ENCODE measurements at regions of chr11 and their contacts with region 1.

Region 1: DNA sequence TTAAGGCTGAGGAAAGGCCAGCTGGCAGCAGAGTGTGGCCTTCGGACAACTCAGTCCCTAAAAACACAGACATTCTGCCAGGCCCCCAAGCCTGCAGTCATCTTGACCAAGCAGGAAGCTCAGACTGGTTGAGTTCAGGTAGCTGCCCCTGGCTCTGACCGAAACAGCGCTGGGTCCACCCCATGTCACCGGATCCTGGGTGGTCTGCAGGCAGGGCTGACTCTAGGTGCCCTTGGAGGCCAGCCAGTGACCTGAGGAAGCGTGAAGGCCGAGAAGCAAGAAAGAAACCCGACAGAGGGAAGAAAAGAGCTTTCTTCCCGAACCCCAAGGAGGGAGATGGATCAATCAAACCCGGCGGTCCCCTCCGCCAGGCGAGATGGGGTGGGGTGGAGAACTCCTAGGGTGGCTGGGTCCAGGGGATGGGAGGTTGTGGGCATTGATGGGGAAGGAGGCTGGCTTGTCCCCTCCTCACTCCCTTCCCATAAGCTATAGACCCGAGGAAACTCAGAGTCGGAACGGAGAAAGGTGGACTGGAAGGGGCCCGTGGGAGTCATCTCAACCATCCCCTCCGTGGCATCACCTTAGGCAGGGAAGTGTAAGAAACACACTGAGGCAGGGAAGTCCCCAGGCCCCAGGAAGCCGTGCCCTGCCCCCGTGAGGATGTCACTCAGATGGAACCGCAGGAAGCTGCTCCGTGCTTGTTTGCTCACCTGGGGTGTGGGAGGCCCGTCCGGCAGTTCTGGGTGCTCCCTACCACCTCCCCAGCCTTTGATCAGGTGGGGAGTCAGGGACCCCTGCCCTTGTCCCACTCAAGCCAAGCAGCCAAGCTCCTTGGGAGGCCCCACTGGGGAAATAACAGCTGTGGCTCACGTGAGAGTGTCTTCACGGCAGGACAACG is 11.7 kb downstream of the CXCR5 start:
- DNase-seq: peak; percentile 95
- H3K4me3 Mint-ChIP-seq: peak overlapping the region; percentile 72
- H3K27ac Mint-ChIP-seq: peak overlapping the region; percentile 97
- H3K4me1 Mint-ChIP-seq: peaks cover 78% of the 10 kb centered on the region
- H3K27me3 Mint-ChIP-seq: no peaks in the 10 kb centered on the region

Region 2: DNA sequence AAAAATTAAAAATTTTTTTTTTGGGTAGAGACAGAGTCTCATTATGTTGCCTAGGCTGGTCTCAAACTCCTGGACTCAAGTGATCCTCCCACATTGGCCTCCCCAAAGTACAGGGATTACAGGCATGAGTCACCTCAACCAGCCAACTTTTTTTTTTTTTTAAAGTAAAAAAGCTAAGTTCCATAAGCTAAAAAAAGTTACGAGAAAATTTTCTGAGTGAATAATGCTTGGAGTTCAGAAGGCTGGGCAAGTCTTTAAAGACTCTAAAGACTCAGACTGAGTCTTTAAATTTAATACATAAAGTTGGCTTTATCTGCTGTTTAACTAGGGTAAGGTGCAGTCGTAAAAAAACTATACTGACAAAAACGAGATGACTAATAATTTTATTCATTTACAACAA is 110.0 kb before region 1 on chr11:
- CTCF ChIA-PET with region 1: interaction called, 32 read pairs
- intact Hi-C with region 1: no loop called
- DNase-seq: peak; percentile 52
- H3K4me3 Mint-ChIP-seq: peak overlapping the region; percentile 42
- H3K27ac Mint-ChIP-seq: peak overlapping the region; percentile 81
- H3K4me1 Mint-ChIP-seq: peaks cover 54% of the 10 kb centered on the region
- H3K27me3 Mint-ChIP-seq: no peaks in the 10 kb centered on the region

Region 3: DNA sequence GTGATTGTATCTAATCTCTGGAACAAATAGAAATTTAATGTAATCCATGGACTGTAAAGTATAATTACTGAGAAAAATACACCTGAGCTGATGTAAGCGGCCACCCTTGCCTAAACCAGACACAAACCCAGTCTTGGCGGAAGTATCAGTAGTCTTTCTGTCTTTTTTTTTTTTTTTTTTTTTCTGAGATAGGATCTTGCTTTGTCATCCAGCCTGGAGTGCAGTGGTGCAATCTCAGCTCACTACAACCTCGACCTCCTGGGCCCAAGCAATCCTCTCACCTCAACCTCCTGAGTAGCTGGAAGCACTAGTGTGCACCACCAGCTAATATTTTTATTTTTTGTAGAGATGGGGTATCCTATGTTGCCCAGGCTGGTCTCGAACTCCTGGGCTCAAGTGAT is 17.2 kb before region 1 on chr11:
- CTCF ChIA-PET with region 1: interaction called, 32 read pairs
- intact Hi-C with region 1: loop called (anchors 1 kb)
- DNase-seq: peak; percentile 63
- H3K4me3 Mint-ChIP-seq: peak overlapping the region; percentile 31
- H3K27ac Mint-ChIP-seq: peak overlapping the region; percentile 99
- H3K4me1 Mint-ChIP-seq: peaks cover 96% of the 10 kb centered on the region
- H3K27me3 Mint-ChIP-seq: no peaks in the 10 kb centered on the region

Region 4: GRCh38 chr11:118883368-118884071 is 11.9 kb before region 1 on chr11 and contains the start of gene CXCR5:
- CTCF ChIA-PET with region 1: interaction called, 32 read pairs
- intact Hi-C with region 1: loop called (anchors 1 kb)
- DNase-seq: peak; percentile 87
- H3K4me3 Mint-ChIP-seq: peak within 1 kb of the TSS; percentile 83
- H3K27ac Mint-ChIP-seq: peak within 1 kb of the TSS; percentile 99
- H3K4me1 Mint-ChIP-seq: peaks cover 84% of the 10 kb centered on the region
- H3K27me3 Mint-ChIP-seq: no peaks in the 10 kb centered on the region
- total RNA-seq, gene CXCR5: 25.6 to 26.1 TPM